Uterus (tissue), 4 donors: ENCODE measurements at regions of chr22 and their contacts with region 1.

Region 1: GRCh38 chr22:46196278-46196677 is 46.0 kb downstream of the PPARA start:
- DNase-seq: no peak
- H3K4me3 ChIP-seq: no peak overlapping the region
- H3K27ac ChIP-seq: no peak overlapping the region
- H3K4me1 ChIP-seq: no peaks in the 10 kb centered on the region
- H3K27me3 ChIP-seq: no peaks in the 10 kb centered on the region
- CTCF ChIP-seq: no peak
- POLR2A ChIP-seq: no peak

Region 2: GRCh38 chr22:44758346-44758973 is 1437.8 kb before region 1 on chr22:
- intact Hi-C with region 1: no loop called
- DNase-seq: no peak
- H3K4me3 ChIP-seq: no peak overlapping the region
- H3K27ac ChIP-seq: no peak overlapping the region
- H3K4me1 ChIP-seq: no peaks in the 10 kb centered on the region
- H3K27me3 ChIP-seq: peaks cover 0 to 4% of the 10 kb centered on the region in 2 donors
- CTCF ChIP-seq: no peak
- POLR2A ChIP-seq: no peak

Region 3: DNA sequence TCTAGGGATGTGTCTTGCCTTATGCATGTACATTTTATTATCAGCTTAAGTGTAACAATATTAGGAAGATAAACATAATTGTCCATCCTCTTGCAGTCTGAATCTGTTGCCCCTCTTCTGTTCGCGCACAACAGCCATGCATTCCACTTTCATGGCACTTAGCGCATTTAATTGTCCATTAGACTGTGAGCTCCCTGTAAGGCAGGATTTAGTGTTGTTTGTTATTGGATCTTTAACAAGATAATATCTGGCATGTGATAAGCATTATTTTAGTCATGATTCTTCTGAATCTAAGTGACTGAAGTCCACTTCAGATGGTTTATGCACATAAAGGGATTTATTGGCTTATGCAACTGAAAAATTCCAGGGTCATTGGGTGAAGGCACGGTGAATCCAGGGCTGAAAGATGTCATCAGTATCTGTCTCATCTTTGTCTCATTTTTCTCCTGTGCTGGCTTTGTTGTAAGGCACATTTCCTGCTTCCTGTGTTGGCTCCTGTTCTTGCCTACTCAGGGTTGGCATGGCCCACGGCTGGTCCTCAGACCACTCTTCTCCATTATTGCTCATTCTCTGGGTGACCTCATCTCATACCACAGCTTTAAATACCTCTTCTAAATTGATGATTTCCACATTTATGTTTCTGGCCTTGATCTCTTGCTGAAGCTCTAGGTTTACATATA is 487.1 kb before region 1 on chr22:
- intact Hi-C with region 1: loop called (anchors 10 kb)
- DNase-seq: no peak
- H3K4me3 ChIP-seq: no peak overlapping the region
- H3K27ac ChIP-seq: no peak overlapping the region
- H3K4me1 ChIP-seq: peaks cover 0 to 6% of the 10 kb centered on the region in 2 donors
- H3K27me3 ChIP-seq: no peaks in the 10 kb centered on the region
- CTCF ChIP-seq: no peak
- POLR2A ChIP-seq: no peak

Region 4: GRCh38 chr22:45968751-45969413 is 227.4 kb before region 1 on chr22:
- intact Hi-C with region 1: no loop called
- DNase-seq: no peak
- H3K4me3 ChIP-seq: no peak overlapping the region
- H3K27ac ChIP-seq: no peak overlapping the region
- H3K4me1 ChIP-seq: peaks cover 0 to 16% of the 10 kb centered on the region in 2 donors
- H3K27me3 ChIP-seq: peaks cover 8 to 23% of the 10 kb centered on the region in 2 donors
- CTCF ChIP-seq: no peak
- POLR2A ChIP-seq: no peak